Activated naive CD4-positive, alpha-beta T cell treated with anti-CD3 and anti-CD28 coated beads for 36 hours (primary cell): ENCODE measurements at regions of chr10 and their contacts with region 1.

Region 1: GRCh38 chr10:128211953-128212727 is 85.9 kb upstream of the MKI67 start:
- DNase-seq: peak; percentile 80
- H3K4me3 Mint-ChIP-seq: peak overlapping the region; percentile 64
- H3K27ac Mint-ChIP-seq: no peak overlapping the region
- H3K4me1 Mint-ChIP-seq: peaks cover 4% of the 10 kb centered on the region
- H3K27me3 Mint-ChIP-seq: no peaks in the 10 kb centered on the region

Region 2: DNA sequence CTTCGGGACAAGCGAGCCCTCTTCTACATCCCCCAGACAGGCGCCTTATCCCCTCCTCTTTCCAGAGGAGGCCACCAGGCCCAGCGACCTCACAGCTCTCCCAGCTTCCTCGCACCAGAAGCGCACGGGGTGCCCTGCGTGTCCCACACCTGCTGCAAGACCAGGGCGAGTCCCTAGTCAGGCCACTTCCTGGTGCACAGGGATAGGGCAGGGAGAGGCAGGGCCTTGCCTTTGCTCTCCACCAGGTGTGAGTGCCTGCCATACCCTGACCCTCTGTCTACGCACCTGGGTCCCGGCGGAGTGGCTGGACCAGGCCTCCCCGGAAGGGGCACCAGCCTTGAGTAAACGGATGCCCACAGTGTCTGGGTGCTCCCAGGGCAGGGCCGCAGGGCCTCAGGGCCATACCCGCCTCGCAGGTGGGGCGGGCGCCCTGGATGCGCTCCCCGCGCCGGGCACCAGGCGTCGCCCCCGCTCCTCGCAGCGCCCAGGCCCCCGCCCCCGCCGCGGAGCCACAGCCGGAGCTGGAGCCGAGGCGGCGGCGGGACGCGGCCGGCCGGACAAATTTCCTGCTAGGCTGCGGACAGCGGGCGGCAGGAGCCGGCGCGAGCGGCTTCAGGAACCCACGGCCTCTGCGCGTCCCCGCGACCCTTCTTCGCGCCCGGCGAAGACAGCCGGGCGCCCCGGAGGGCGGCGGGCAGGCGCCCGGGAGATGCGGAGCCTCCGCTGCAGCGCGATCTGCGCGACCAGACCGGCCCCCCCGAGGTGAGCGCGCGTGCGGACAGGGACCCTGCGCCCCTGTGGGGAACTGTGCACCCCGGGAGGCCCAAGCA is 305.4 kb before region 1 on chr10 and contains the start of gene PTPRE:
- CTCF ChIA-PET with region 1: no interaction called
- intact Hi-C with region 1: loop called (anchors 1 kb)
- DNase-seq: peak; percentile 68
- H3K4me3 Mint-ChIP-seq: peak within 1 kb of the TSS; percentile 36
- H3K27ac Mint-ChIP-seq: no peak within 1 kb of the TSS
- H3K4me1 Mint-ChIP-seq: no peaks in the 10 kb centered on the region
- H3K27me3 Mint-ChIP-seq: peaks cover 20% of the 10 kb centered on the region
- total RNA-seq, gene PTPRE: 13.4 to 16.4 TPM

Region 3: GRCh38 chr10:128064108-128064969 is 147.8 kb before region 1 on chr10:
- CTCF ChIA-PET with region 1: interaction called, 3 read pairs
- intact Hi-C with region 1: loop called (anchors 5 kb)
- DNase-seq: peak; percentile 89
- H3K4me3 Mint-ChIP-seq: peak overlapping the region; percentile 26
- H3K27ac Mint-ChIP-seq: peak overlapping the region; percentile 93
- H3K4me1 Mint-ChIP-seq: peaks cover 58% of the 10 kb centered on the region
- H3K27me3 Mint-ChIP-seq: no peaks in the 10 kb centered on the region

Region 4: GRCh38 chr10:128173369-128173768 is 38.8 kb before region 1 on chr10:
- CTCF ChIA-PET with region 1: interaction called, 14 read pairs
- intact Hi-C with region 1: no loop called
- DNase-seq: no peak
- H3K4me3 Mint-ChIP-seq: no peak overlapping the region
- H3K27ac Mint-ChIP-seq: no peak overlapping the region
- H3K4me1 Mint-ChIP-seq: no peaks in the 10 kb centered on the region
- H3K27me3 Mint-ChIP-seq: peaks cover 8% of the 10 kb centered on the region

Region 5: DNA sequence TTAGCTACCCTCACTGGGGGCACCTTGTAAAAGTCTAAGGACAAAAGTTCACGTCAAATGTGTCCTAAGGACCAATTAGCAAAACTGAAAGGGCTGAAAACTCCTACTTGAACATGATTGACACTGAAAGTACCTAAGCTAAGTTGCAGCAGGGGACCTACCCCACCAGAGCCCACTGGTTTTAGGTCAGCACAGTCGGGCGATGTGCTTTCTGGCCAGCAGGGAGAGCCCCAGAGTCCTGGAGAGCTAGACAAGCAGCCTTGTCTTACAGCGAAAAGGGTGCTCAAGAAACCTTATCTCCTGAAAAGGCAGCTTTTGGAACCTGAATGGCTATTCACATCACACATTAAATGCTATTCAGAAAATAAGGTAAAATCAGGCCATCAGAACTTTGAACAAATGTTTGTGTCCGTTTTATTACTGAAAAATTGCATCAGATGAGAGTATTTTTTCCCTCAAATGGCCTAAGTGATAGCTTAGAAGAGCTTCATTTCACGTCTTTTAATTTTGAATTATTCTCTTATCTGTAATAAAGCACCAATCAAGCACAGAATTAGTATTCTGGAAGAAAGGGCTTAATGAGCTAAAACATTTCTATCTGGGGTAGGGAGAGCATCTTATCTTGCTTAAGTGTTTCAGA is 33.7 kb before region 1 on chr10:
- CTCF ChIA-PET with region 1: interaction called, 14 read pairs
- intact Hi-C with region 1: loop called (anchors 1 kb)
- DNase-seq: peak; percentile 64
- H3K4me3 Mint-ChIP-seq: no peak overlapping the region
- H3K27ac Mint-ChIP-seq: no peak overlapping the region
- H3K4me1 Mint-ChIP-seq: peaks cover 20% of the 10 kb centered on the region
- H3K27me3 Mint-ChIP-seq: no peaks in the 10 kb centered on the region

Region 6: DNA sequence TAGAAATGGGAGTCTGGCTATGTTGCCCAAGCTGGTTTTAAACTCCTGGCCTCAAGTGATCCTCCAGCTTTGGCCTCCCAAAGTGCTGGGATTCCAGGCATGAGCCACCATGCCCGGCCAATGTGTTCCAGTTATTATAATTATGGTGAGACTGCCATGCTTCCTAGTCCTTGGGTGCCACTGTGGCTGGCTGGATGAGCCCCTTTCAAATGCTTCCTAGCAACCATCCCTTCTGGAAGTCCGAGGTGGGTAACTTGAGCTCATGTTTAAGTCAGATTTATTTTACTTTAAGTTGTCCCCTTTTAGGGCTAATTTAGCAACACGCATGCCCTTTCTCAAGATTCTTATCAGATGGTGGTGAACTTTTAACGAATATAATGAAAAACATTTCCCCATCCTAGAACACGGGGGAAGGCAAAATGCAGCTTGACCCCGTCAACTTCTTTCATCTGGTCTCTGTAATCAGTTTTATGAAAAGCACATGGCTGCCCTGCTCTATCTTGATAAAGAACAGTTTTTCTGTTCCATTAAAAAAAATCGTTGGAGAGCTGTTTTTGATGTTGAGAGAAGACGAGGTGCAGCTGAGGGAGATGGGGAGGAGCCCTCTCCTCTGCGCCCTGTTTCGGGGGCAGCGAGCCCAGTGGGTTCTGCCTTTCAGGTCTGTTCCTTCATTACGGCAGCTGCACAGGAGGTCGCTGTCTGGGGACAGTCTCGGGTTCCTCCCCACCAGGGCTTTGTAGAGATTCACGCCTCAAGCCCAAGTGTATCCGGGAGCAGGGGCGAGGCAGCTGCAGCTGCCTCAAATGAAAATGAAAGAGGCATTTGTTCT is 25.0 kb before region 1 on chr10:
- CTCF ChIA-PET with region 1: interaction called, 23 read pairs
- intact Hi-C with region 1: no loop called
- DNase-seq: peak; percentile 51
- H3K4me3 Mint-ChIP-seq: peak overlapping the region; percentile 72
- H3K27ac Mint-ChIP-seq: no peak overlapping the region
- H3K4me1 Mint-ChIP-seq: peaks cover 12% of the 10 kb centered on the region
- H3K27me3 Mint-ChIP-seq: no peaks in the 10 kb centered on the region

Region 7: DNA sequence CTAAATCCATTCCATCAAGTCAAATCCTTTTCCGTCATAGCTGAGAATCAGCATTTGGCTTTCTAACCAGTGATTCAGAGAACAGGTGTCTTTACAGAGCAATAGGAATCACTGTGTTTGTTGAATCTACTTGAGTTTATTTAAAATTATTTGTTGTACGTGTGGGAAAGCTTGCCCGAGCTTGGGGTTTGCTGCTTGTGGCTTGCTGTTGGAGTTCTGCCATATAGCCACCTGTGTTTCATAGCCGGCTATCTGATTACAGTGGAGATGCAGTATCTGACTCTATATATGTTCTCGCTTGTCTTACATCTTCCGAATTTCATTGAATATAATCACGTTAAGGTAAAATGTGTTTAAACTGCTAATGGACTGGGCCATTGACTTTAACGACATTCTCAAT is 188.4 kb after region 1 on chr10:
- CTCF ChIA-PET with region 1: no interaction called
- intact Hi-C with region 1: no loop called
- DNase-seq: no peak
- H3K4me3 Mint-ChIP-seq: no peak overlapping the region
- H3K27ac Mint-ChIP-seq: no peak overlapping the region
- H3K4me1 Mint-ChIP-seq: no peaks in the 10 kb centered on the region
- H3K27me3 Mint-ChIP-seq: no peaks in the 10 kb centered on the region